ENCODE measurements at regions of chr1 and their contacts with region 1.

Region 1: GRCh38 chr1:25810341-25811299 is 9.1 kb upstream of the MTFR1L start:
- DNase-seq: peak; percentile 85
- H3K4me3 Mint-ChIP-seq: no peak overlapping the region
- H3K27ac Mint-ChIP-seq: no peak overlapping the region
- H3K4me1 Mint-ChIP-seq: peaks cover 2% of the 10 kb centered on the region
- H3K27me3 Mint-ChIP-seq: no peaks in the 10 kb centered on the region

Region 2: DNA sequence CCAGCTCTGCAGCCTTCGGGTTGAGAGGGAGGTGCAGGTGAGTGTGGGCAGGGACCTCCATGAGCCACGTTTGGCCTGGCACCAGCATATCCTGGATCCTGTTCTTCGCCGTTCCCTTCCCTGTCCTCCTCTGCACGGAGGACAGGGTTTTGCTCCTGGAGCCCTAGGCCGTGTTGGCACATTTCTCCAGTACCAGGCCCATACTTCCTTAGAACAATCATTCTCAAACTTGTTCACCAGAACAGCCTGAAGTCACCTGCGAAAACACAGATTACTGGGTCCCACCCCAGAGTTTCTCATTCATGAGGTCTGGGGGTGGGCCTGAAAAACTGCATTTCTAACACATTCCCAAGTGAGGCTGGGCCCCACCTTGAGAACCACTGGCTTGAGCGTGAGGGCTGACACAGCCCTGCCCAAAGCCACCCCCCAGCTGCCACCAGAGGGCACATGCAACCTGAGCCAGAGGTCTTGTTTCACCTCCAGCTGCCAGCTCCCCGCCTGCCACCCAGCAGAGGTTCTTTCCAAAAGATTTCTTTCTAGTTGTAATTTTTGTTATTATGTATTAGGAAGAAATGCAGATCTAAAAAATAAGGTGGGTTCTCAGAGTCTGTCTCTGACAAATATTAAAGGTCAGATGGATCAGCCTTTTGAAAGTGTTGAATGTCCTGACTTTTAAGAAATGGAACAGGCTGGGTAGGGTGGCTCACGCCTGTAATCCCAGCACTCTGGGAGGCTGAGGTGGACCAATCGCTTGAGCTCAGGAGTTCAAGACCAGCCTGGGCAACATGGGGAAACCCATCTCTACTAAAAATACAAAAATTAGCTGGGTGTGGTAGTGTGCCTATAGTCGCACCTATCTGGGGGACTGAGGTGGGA is 306.8 kb before region 1 on chr1:
- CTCF ChIA-PET with region 1: interaction called, 13 read pairs
- POLR2A ChIA-PET with region 1: no interaction called
- intact Hi-C with region 1: loop called (anchors 5 kb)
- DNase-seq: peak; percentile 76
- H3K4me3 Mint-ChIP-seq: no peak overlapping the region
- H3K27ac Mint-ChIP-seq: no peak overlapping the region
- H3K4me1 Mint-ChIP-seq: peaks cover 19% of the 10 kb centered on the region
- H3K27me3 Mint-ChIP-seq: no peaks in the 10 kb centered on the region

Region 3: DNA sequence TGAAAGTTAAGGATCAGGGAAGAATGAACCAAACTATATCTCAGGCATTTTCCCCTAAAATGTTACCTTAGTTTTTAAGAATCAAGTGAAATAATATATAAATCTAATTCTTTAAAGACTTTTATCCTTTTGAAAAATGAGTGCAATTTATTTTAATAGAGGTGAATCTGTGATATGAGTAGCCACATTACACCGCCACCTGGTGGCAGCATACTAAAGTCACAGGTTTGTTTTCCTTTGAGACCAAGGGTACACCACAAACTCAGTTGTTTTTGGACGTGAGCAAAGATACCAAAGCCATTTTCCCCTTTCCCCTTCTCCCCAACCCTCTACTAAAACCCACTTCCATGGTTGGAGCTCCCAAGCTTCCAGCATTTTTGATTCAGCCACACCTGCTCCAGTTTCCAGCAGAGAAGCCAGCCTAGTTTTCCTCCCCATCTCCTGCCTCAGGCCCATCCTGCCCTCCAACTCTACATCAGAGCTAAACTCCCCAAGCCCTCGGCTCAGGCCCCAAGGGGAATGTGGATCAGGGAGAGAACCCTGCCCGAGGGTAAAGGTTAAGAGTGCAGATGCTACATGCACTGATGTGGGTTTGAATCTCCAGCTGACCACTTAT is 290.1 kb before region 1 on chr1:
- CTCF ChIA-PET with region 1: interaction called, 16 read pairs
- POLR2A ChIA-PET with region 1: no interaction called
- intact Hi-C with region 1: no loop called
- DNase-seq: peak; percentile 77
- H3K4me3 Mint-ChIP-seq: no peak overlapping the region
- H3K27ac Mint-ChIP-seq: peak overlapping the region; percentile 47
- H3K4me1 Mint-ChIP-seq: peaks cover 5% of the 10 kb centered on the region
- H3K27me3 Mint-ChIP-seq: no peaks in the 10 kb centered on the region

Region 4: DNA sequence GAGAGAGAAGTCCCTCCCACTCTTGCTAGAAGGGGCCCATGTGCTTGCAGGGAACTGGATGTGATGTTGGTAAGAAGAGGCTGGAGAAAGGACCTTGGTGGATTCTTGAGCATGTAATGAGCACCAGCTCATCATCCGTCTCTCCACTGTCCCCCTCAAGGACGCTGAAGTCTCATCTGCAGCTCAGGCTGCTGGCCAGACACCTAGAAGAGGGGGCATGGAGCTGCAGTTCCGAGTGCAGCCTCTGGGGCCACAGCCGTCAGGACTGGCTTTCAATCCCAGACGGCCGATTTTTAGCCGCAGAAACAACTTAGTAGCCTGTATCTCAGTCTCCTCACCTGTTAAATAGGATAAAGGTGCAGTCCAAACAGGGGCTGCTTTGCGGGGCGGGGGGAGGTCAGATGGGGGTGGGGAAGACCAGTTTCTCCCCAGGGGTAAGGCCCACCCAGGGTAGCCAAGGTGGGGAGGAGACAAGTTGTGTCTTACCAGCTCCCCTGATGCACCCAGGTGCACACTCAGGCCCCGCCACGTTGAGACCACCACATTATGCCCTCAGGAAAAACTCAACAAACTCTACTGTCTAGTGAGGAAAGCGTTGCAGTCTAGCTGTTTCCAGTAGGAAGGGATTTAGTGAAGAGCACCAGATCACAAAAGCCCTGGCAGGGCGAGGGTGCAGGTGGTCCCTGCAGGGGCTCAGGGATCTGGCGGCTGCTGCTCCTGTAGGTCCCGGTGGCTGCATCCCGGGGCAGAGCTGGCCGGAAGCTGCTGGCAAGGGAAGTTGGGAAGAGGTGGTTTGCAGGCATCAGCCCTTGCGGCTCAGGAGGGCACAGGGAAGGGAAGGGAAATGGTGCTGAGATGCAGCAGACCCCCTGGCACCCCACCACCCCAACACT is 237.7 kb before region 1 on chr1:
- CTCF ChIA-PET with region 1: interaction called, 10 read pairs
- POLR2A ChIA-PET with region 1: no interaction called
- intact Hi-C with region 1: no loop called
- DNase-seq: peak; percentile 66
- H3K4me3 Mint-ChIP-seq: no peak overlapping the region
- H3K27ac Mint-ChIP-seq: no peak overlapping the region
- H3K4me1 Mint-ChIP-seq: peaks cover 23% of the 10 kb centered on the region
- H3K27me3 Mint-ChIP-seq: no peaks in the 10 kb centered on the region

Region 5: DNA sequence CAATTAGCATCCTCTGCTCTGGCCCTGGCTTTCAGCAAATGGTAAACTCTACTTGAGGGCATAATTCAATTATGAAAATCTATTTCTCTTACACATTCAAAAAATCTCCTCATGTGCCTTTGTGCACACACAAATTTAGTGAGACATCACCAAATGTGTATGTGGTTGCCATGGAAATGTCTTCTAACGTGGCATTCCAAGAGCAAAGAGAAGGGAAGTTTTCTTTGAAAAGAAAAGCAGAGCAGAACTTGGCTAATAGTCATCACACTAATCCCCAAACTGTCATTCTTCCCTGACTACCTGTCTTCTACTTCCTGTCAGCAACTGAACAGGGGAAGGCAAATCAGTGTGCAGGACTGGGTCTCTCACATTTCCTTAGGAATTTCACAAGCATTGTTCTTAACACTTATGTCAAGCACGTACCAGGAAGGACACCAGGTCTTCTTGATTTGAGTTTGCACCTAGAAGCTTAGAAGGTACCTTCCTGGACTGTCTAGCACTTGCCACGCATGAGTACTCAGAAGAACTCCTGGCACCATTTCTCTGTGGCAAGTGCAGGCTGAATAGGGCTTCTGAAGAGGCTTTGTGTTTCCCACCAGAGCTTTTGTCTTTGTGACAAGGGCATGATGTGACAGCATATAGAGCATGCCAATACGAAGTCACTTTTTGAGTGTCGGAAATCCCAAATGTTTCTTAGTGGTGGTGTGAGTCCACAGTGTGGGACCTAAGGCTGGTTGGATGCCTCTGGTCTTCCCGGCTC is 161.8 kb before region 1 on chr1:
- CTCF ChIA-PET with region 1: no interaction called
- POLR2A ChIA-PET with region 1: no interaction called
- intact Hi-C with region 1: no loop called
- DNase-seq: peak; percentile 7
- H3K4me3 Mint-ChIP-seq: no peak overlapping the region
- H3K27ac Mint-ChIP-seq: no peak overlapping the region
- H3K4me1 Mint-ChIP-seq: peaks cover 26% of the 10 kb centered on the region
- H3K27me3 Mint-ChIP-seq: no peaks in the 10 kb centered on the region